CD8-positive, alpha-beta T cell (primary cell): ENCODE measurements at regions of chr12 and their contacts with region 1.

Region 1: GRCh38 chr12:131710464-131711457 is at the start of gene SFSWAP:
- DNase-seq: peak; percentile 54 to 86 (median 77)
- ATAC-seq: peak; percentile 84
- H3K4me3 ChIP-seq: peak within 1 kb of the TSS; percentile 76 to 99
- H3K4me3 Mint-ChIP-seq: peak within 1 kb of the TSS; percentile 99
- H3K27ac ChIP-seq: peak within 1 kb of the TSS; percentile 86 to 98
- H3K27ac Mint-ChIP-seq: peak within 1 kb of the TSS; percentile 98
- H3K4me1 ChIP-seq: peaks cover 20% of the 10 kb centered on the region
- H3K4me1 Mint-ChIP-seq: peaks cover 31% of the 10 kb centered on the region
- H3K27me3 ChIP-seq: no peaks in the 10 kb centered on the region
- H3K27me3 Mint-ChIP-seq: no peaks in the 10 kb centered on the region
- CTCF ChIP-seq: no peak
- total RNA-seq, gene SFSWAP: 83.8 to 94.0 TPM

Region 2: GRCh38 chr12:130871286-130872178 is 839.2 kb before region 1 on chr12 and contains the start of gene RAN:
- CTCF ChIA-PET with region 1: no interaction called
- POLR2A ChIA-PET with region 1: no interaction called
- intact Hi-C with region 1: loop called in 1 of 2 experiments (anchors 2 kb)
- DNase-seq: peak; percentile 83 to 98 (median 89)
- ATAC-seq: peak; percentile 80
- H3K4me3 ChIP-seq: peak within 1 kb of the TSS; percentile 72 to 82
- H3K4me3 Mint-ChIP-seq: peak within 1 kb of the TSS; percentile 94
- H3K27ac ChIP-seq: peak within 1 kb of the TSS; percentile 84 to 85
- H3K27ac Mint-ChIP-seq: peak within 1 kb of the TSS; percentile 95
- H3K4me1 ChIP-seq: peaks cover 54% of the 10 kb centered on the region
- H3K4me1 Mint-ChIP-seq: peaks cover 65% of the 10 kb centered on the region
- H3K27me3 ChIP-seq: no peaks in the 10 kb centered on the region
- H3K27me3 Mint-ChIP-seq: no peaks in the 10 kb centered on the region
- CTCF ChIP-seq: no peak
- total RNA-seq, gene RAN: 342 to 352 TPM

Region 3: DNA sequence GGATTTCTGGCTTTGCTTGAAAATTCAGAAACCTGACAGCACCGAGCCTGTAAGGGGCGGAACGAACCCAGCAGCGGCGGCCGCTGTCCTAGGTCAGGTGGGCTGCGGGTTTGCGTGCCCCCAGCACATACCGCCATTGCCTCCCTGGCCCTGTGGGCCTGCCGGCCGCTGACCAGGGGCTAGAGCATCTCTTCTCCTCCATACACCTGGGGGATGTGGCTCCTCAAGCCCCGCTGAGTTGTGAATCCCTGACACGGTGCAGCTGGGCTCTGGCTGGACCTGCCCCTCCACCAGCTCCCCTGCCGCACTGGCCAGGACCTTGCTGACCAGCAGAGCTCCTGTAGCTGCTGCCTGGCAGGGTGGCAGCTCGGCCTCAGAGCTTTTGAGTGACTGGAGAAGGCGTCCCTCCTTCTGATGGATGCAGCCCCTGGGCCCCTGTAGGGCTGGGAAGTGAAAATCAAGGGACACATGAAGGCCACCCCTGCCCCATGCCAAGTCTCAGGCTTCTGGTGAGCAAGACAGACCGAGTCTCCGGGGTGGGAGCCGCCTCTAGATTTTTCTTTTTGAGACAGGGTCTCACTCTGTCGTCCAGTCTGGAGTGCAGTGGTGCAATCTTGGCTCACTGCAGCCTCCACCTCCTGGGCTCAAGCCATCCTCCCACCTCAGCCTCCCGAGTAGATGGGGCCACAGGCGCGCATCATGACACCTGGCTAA is 184.8 kb before region 1 on chr12:
- CTCF ChIA-PET with region 1: no interaction called
- POLR2A ChIA-PET with region 1: no interaction called
- intact Hi-C with region 1: no loop called
- DNase-seq: peak in 1 of 9 experiments; percentile 43
- ATAC-seq: no peak
- H3K4me3 ChIP-seq: no peak overlapping the region
- H3K4me3 Mint-ChIP-seq: no peak overlapping the region
- H3K27ac ChIP-seq: no peak overlapping the region
- H3K27ac Mint-ChIP-seq: no peak overlapping the region
- H3K4me1 ChIP-seq: no peaks in the 10 kb centered on the region
- H3K4me1 Mint-ChIP-seq: peaks cover 4% of the 10 kb centered on the region
- H3K27me3 ChIP-seq: no peaks in the 10 kb centered on the region
- H3K27me3 Mint-ChIP-seq: peaks cover 2% of the 10 kb centered on the region
- CTCF ChIP-seq: no peak

Region 4: GRCh38 chr12:131608740-131609690 is 101.7 kb before region 1 on chr12:
- CTCF ChIA-PET with region 1: no interaction called
- POLR2A ChIA-PET with region 1: interaction called, 3 read pairs
- intact Hi-C with region 1: loop called in 1 of 2 experiments (anchors 10 kb)
- DNase-seq: peak; percentile 40 to 82 (median 60)
- ATAC-seq: peak; percentile 80
- H3K4me3 ChIP-seq: no peak overlapping the region
- H3K4me3 Mint-ChIP-seq: no peak overlapping the region
- H3K27ac ChIP-seq: no peak overlapping the region
- H3K27ac Mint-ChIP-seq: no peak overlapping the region
- H3K4me1 ChIP-seq: peaks cover 32% of the 10 kb centered on the region
- H3K4me1 Mint-ChIP-seq: peaks cover 43% of the 10 kb centered on the region
- H3K27me3 ChIP-seq: no peaks in the 10 kb centered on the region
- H3K27me3 Mint-ChIP-seq: no peaks in the 10 kb centered on the region
- CTCF ChIP-seq: peak; percentile 78

Region 5: DNA sequence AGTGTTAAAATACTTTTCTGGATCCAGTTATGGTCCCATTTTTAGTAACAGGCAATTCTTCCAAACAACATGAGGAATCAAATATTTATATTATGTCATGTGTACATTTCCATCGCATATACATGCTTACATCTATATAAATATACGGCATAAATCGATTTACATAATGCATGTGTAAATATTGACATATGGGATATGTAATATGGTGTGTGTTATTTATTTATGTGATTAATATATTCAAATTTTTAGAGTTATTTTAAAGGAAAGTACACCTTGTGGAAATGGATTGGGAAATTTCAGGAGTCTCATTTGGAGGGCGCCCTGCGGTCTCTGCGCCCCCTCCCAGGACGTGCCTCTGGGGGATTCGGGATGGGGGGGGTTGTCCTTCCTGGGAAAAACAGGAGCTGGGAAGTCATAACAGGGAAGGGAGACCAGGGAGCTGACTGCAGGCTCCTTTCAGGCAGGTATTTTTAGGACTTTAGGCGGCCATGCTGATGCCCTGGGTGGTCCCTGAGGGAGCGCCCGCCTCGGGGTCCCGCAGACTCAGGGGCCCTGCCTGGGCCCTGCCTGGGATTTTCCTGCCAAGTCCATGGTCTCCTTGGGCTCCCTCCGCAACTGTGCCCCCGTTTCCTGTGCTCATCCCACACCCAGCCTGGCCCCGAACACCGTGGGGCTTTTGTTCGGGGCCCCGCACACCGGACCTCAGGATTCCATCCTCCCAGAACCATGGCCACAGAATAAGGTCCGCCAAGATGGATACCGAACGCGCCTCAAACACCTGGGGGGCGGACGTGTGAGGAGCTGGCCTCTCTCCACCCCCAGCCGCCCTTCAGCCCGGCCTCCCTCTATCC is 82.5 kb before region 1 on chr12:
- CTCF ChIA-PET with region 1: no interaction called
- POLR2A ChIA-PET with region 1: no interaction called
- intact Hi-C with region 1: loop called in 1 of 2 experiments (anchors 5 kb)
- DNase-seq: no peak
- ATAC-seq: peak; percentile 30
- H3K4me3 ChIP-seq: no peak overlapping the region
- H3K4me3 Mint-ChIP-seq: no peak overlapping the region
- H3K27ac ChIP-seq: peak overlapping the region in 1 of 2 experiments; percentile 13
- H3K27ac Mint-ChIP-seq: no peak overlapping the region
- H3K4me1 ChIP-seq: peaks cover 18% of the 10 kb centered on the region
- H3K4me1 Mint-ChIP-seq: peaks cover 8% of the 10 kb centered on the region
- H3K27me3 ChIP-seq: no peaks in the 10 kb centered on the region
- H3K27me3 Mint-ChIP-seq: peaks cover 4% of the 10 kb centered on the region
- CTCF ChIP-seq: no peak

Region 6: DNA sequence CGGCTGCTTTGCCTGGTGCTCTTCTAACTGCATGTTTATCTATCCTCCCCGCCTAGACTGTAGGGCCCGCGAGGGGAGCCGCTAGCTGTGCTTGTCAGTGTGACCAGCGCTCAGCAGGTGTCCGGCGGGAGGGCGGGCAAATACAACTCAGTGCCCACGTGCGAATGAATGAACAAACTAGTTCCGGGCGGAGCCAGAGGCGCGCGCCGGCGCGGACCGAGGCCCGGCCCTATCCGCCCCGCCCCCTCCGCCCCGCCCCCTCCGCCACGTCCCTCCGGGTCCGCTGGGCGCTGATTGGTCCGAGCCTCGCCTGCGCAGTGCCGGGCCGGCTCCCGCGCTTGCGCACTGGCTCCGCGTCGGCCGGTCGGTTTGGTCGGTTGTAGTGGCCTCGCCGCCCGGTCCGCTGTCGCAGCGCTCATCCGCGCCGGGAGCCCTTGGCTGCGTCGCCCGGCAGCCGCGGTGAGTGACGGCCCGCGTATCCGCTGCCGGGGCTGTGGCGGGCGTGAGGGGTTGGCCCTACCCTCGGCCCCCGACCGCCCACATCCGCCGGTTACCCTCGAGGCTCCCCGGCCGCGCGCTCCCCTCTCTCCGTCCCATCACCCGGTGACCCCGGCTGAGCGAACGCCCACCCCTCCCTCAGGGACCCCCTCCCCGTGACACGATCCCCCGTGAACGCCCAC is 373.3 kb after region 1 on chr12:
- CTCF ChIA-PET with region 1: no interaction called
- POLR2A ChIA-PET with region 1: no interaction called
- intact Hi-C with region 1: loop called in 1 of 2 experiments (anchors 5 kb)
- DNase-seq: peak; percentile 74 to 94 (median 85)
- ATAC-seq: peak; percentile 92
- H3K4me3 ChIP-seq: peak overlapping the region; percentile 62 to 63
- H3K4me3 Mint-ChIP-seq: peak overlapping the region; percentile 85
- H3K27ac ChIP-seq: peak overlapping the region; percentile 70 to 88
- H3K27ac Mint-ChIP-seq: peak overlapping the region; percentile 85
- H3K4me1 ChIP-seq: peaks cover 23% of the 10 kb centered on the region
- H3K4me1 Mint-ChIP-seq: peaks cover 30% of the 10 kb centered on the region
- H3K27me3 ChIP-seq: no peaks in the 10 kb centered on the region
- H3K27me3 Mint-ChIP-seq: no peaks in the 10 kb centered on the region
- CTCF ChIP-seq: no peak

Region 7: GRCh38 chr12:132866251-132866828 is 1155.6 kb after region 1 on chr12:
- CTCF ChIA-PET with region 1: no interaction called
- POLR2A ChIA-PET with region 1: no interaction called
- intact Hi-C with region 1: loop called in 1 of 2 experiments (anchors 10 kb)
- DNase-seq: no peak
- ATAC-seq: no peak
- H3K4me3 ChIP-seq: no peak overlapping the region
- H3K4me3 Mint-ChIP-seq: no peak overlapping the region
- H3K27ac ChIP-seq: peak overlapping the region in 1 of 2 experiments; percentile 8
- H3K27ac Mint-ChIP-seq: peak overlapping the region; percentile 86
- H3K4me1 ChIP-seq: peaks cover 24% of the 10 kb centered on the region
- H3K4me1 Mint-ChIP-seq: peaks cover 26% of the 10 kb centered on the region
- H3K27me3 ChIP-seq: no peaks in the 10 kb centered on the region
- H3K27me3 Mint-ChIP-seq: no peaks in the 10 kb centered on the region
- CTCF ChIP-seq: no peak